ENCODE measurements at regions of chr3 and their contacts with region 1.

Region 1: DNA sequence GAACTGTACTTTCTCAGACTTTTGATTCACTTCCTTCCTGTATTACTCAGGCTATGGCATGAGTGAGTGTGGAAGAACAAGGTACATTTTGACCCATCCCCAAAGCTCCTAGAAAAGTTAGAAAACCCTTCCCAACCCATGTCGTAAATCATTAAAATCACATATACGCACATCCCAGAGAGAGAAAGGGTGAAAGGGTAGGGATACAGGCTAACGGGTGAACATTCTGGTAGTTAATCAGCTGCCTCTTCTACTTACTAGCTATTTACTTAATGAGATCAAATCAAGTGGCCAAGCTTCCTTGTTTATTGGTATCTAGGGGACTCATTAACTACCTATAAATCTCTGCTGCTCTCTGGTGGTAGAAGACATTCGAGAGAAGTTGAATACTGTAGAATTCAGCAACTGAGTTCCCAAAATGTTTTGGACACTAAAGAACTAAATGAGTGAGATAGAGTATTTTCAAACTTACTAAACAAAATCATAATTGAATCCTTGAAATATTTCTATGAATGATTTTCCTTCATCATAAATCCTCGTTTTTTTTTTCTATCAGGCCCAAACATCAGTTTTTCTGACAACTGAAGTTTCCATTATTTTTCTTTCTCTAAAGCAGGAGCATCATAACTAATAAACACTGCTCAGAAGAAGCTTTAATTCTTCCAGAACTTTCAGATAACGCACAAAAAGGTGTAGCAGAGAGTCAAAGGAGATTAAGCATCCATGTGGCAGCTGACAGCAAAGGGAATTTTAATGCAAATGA is 124.2 kb downstream of the IMPG2 start:
- DNase-seq: no peak
- H3K4me3 ChIP-seq: no peak overlapping the region
- H3K27ac ChIP-seq: no peak overlapping the region
- H3K4me1 ChIP-seq: no peaks in the 10 kb centered on the region
- H3K27me3 ChIP-seq: no peaks in the 10 kb centered on the region
- CTCF ChIP-seq: peak; percentile 56 to 64 (median 59)
- EP300 ChIP-seq: no peak
- POLR2A ChIP-seq: no peak

Region 2: DNA sequence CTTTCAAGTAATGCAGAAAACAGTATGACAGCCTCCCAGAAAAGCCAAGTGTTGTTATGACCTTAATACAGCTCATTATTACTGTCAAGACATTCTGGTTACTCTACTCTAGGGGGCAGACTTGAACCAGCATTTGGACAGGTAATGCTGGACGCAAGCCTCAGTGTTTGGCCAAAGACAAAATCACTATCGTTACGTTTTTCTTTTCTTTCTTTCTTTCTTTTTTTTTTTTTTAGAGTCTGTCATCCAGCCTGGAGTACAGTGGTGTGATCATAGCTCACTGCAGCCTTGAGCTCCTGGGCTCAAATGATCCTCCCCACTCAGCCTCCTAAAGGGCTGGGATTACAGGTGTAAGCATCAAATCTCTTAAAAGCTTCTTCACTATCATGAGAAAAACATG is 733.1 kb before region 1 on chr3:
- intact Hi-C with region 1: loop called (anchors 10 kb)
- DNase-seq: no peak
- H3K4me3 ChIP-seq: no peak overlapping the region
- H3K27ac ChIP-seq: no peak overlapping the region
- H3K4me1 ChIP-seq: no peaks in the 10 kb centered on the region
- H3K27me3 ChIP-seq: no peaks in the 10 kb centered on the region
- CTCF ChIP-seq: peak; percentile 14 to 63 (median 58)
- EP300 ChIP-seq: no peak
- POLR2A ChIP-seq: no peak

Region 3: DNA sequence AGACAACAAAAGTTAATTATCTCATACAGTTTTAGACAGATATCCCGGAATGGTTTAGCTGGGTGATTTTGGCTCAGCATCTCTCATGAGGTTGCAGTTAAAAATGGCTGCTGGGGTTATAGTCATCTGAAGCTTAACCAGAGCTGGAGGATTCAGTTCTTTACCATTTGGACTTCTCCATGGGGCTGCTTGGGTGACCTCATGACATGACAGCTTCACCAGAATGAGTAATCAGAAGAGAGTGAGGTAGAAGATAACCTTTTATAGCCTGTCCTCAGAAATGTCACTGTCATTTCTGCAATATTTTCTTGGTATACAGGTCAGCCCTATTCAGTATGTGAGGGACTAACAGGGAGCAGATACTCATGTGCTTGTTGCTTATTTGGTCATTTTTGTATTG is 455.9 kb before region 1 on chr3:
- intact Hi-C with region 1: loop called (anchors 5 kb)
- DNase-seq: no peak
- H3K4me3 ChIP-seq: no peak overlapping the region
- H3K27ac ChIP-seq: no peak overlapping the region
- H3K4me1 ChIP-seq: peaks cover 0 to 4% (median 0%) of the 10 kb centered on the region in 4 donors
- H3K27me3 ChIP-seq: no peaks in the 10 kb centered on the region
- CTCF ChIP-seq: no peak
- EP300 ChIP-seq: no peak
- POLR2A ChIP-seq: no peak

Region 4: DNA sequence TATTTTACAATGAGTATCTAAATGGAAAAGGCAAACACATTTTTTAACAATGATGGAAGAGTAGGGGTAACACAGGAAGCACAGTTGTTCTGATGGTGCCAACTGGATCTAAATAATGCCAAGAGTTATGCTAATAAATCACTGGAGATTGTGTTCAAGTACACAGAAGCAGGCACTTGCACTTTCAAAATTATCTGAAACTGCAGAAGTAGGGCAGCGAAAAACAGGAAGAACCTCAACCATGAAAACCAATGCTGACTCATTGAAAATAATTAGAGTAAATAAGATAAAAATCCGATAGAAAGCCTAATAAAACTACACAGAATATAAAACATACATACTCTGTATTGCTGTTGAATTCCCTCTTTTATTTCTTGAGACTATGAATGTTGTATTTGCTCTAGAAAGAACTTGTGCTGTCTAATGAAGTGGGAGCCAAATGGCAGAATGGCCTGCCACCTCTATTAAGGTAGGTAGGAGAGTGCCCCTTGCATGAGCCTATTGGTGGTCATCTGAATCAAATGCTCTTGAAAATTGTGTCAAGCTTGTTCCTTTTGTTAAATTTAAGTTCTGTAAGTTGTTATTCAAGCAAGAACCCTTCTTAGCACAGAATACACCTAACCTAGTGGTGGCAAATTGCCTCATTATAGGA is 296.6 kb before region 1 on chr3:
- intact Hi-C with region 1: loop called (anchors 5 kb)
- DNase-seq: no peak
- H3K4me3 ChIP-seq: no peak overlapping the region
- H3K27ac ChIP-seq: no peak overlapping the region
- H3K4me1 ChIP-seq: no peaks in the 10 kb centered on the region
- H3K27me3 ChIP-seq: no peaks in the 10 kb centered on the region
- CTCF ChIP-seq: no peak
- EP300 ChIP-seq: no peak
- POLR2A ChIP-seq: no peak

Region 5: DNA sequence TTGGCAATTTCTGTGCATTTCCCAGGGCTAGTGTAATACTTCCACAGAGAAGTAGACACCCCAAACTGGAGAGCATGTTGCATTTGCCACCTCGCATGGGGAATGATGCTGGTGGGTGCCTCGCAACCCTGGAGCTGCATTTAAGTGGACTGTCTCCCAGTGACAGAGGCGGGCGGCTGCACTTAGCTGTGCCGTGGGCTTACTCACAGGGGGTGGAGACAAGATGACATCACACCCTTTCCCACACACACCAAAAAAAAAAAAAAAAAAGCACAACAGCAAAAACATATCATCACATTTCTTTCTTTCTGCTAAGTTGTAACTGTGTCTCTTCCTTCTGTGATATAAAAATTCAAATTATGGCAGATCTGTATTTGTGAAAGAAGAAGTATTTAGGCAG is 202.8 kb before region 1 on chr3 and contains the start of gene ABI3BP:
- intact Hi-C with region 1: loop called (anchors 10 kb)
- DNase-seq: peak; percentile 93
- H3K4me3 ChIP-seq: peak within 1 kb of the TSS; percentile 38 to 51 (median 43)
- H3K27ac ChIP-seq: peak within 1 kb of the TSS; percentile 75 to 80 (median 78)
- H3K4me1 ChIP-seq: peaks cover 0 to 40% (median 32%) of the 10 kb centered on the region in 4 donors
- H3K27me3 ChIP-seq: no peaks in the 10 kb centered on the region
- CTCF ChIP-seq: no peak
- EP300 ChIP-seq: no peak
- POLR2A ChIP-seq: peak; percentile 38 to 47
- total RNA-seq, gene ABI3BP: 30.4 to 177 (median 77.9) TPM

Region 6: GRCh38 chr3:101069901-101070798 is 126.0 kb before region 1 on chr3:
- intact Hi-C with region 1: loop called (anchors 5 kb)
- DNase-seq: peak; percentile 68
- H3K4me3 ChIP-seq: no peak overlapping the region
- H3K27ac ChIP-seq: no peak overlapping the region
- H3K4me1 ChIP-seq: peaks cover 0 to 24% (median 14%) of the 10 kb centered on the region in 4 donors
- H3K27me3 ChIP-seq: no peaks in the 10 kb centered on the region
- CTCF ChIP-seq: peak in 3 of 4 experiments; percentile 49 to 62 (median 54)
- EP300 ChIP-seq: no peak
- POLR2A ChIP-seq: no peak

Region 7: GRCh38 chr3:101381809-101382208 is 185.7 kb after region 1 on chr3:
- intact Hi-C with region 1: loop called (anchors 5 kb)
- DNase-seq: no peak
- H3K4me3 ChIP-seq: no peak overlapping the region
- H3K27ac ChIP-seq: peak overlapping the region in 1 of 4 donors; percentile 2
- H3K4me1 ChIP-seq: peaks cover 0 to 57% (median 41%) of the 10 kb centered on the region in 4 donors
- H3K27me3 ChIP-seq: no peaks in the 10 kb centered on the region
- CTCF ChIP-seq: peak in 3 of 4 experiments; percentile 23 to 56 (median 54)
- EP300 ChIP-seq: no peak
- POLR2A ChIP-seq: no peak